ENCODE measurements at regions of chr10 and their contacts with region 1.

Region 1: GRCh38 chr10:11165591-11166543 is 148.2 kb downstream of the CELF2 start:
- DNase-seq: peak; percentile 59 to 89 (median 82)
- H3K4me3 ChIP-seq: peak overlapping the region; percentile 72
- H3K4me3 Mint-ChIP-seq: peak overlapping the region in 2 of 7 donors; percentile 99 to 100
- H3K27ac ChIP-seq: peak overlapping the region; percentile 92
- H3K27ac Mint-ChIP-seq: peak overlapping the region in 7 of 8 donors; percentile 91 to 100 (median 99)
- H3K4me1 ChIP-seq: peaks cover 59% of the 10 kb centered on the region
- H3K4me1 Mint-ChIP-seq: peaks cover 39 to 46% (median 45%) of the 10 kb centered on the region in 3 donors
- H3K27me3 ChIP-seq: no peaks in the 10 kb centered on the region
- H3K27me3 Mint-ChIP-seq: peaks cover 0 to 2% of the 10 kb centered on the region in 2 donors

Region 2: DNA sequence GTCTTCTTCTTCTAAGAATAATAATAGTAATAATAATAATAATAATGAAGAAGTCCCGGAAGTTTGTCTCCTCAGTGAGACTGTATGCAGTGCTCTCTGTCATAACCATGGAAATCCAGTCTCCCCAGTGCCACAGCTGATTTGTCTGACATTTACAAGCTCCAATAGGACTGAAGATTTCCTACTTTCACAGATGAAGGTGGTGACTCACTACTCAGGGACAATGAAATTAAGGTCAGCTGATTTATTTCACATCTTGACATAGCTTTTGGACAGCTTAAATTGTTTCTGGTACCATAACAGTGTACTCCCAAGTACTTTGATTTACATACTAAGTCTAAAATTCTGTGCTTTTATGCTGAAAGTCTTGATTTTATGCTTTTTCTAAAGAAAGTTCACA is 141.3 kb before region 1 on chr10:
- CTCF ChIA-PET with region 1: no interaction called
- POLR2A ChIA-PET with region 1: no interaction called
- DNase-seq: no peak
- H3K4me3 ChIP-seq: no peak overlapping the region
- H3K4me3 Mint-ChIP-seq: no peak overlapping the region
- H3K27ac ChIP-seq: no peak overlapping the region
- H3K27ac Mint-ChIP-seq: no peak overlapping the region
- H3K4me1 ChIP-seq: no peaks in the 10 kb centered on the region
- H3K4me1 Mint-ChIP-seq: no peaks in the 10 kb centered on the region
- H3K27me3 ChIP-seq: no peaks in the 10 kb centered on the region
- H3K27me3 Mint-ChIP-seq: peaks cover 11 to 65% of the 10 kb centered on the region in 2 donors

Region 3: GRCh38 chr10:11113156-11113555 is 52.7 kb before region 1 on chr10:
- CTCF ChIA-PET with region 1: interaction called, 30 read pairs
- POLR2A ChIA-PET with region 1: interaction called, 4 read pairs
- DNase-seq: peak in 3 of 5 donors; percentile 52 to 56 (median 55)
- H3K4me3 ChIP-seq: no peak overlapping the region
- H3K4me3 Mint-ChIP-seq: peak overlapping the region in 4 of 7 donors; percentile 10 to 66 (median 24)
- H3K27ac ChIP-seq: no peak overlapping the region
- H3K27ac Mint-ChIP-seq: peak overlapping the region in 7 of 8 donors; percentile 49 to 96 (median 74)
- H3K4me1 ChIP-seq: peaks cover 9% of the 10 kb centered on the region
- H3K4me1 Mint-ChIP-seq: peaks cover 11 to 27% (median 14%) of the 10 kb centered on the region in 3 donors
- H3K27me3 ChIP-seq: no peaks in the 10 kb centered on the region
- H3K27me3 Mint-ChIP-seq: no peaks in the 10 kb centered on the region

Region 4: DNA sequence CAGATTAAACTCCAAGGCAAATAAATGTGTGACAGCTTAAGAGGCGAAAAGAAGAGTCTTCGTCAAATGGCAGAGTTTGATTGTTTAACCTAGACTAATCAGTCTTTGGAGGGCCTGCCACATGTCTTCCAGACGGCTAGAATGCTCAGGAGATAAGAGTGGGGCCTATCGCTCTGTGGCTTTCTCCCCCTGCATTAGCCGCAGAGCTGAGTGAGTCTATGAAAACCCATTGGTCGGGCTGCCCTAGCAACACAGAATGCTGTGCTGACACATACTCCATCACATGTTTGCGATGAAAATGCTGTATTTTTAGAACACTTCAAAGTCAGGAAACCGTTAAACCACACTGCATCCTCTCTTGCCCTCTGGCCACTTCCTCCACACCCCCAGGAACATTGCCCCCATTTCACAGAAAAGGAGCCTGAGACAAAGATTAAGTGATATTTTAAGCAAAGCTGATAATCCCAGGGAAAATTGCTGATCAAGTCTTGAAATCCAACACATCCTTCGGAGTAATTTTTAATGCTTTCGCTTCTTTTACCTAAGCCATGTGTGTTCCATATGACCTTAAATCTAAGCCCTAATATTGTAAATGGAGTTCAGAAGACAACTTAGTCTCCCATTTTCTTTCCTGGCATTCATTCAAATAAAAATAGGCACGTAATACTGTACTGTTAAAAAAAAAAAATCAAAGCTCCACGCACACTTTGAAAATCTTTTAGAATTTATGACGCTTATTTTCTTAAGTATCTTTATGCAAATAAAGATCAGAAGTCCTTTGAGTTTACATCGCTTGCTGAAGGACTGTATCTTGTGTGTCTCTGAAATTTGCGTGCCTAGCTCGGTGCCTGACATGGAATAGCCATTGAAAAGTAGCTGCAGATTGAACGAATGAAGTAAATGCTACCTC is 13.0 kb after region 1 on chr10:
- CTCF ChIA-PET with region 1: interaction called, 117 read pairs
- POLR2A ChIA-PET with region 1: interaction called, 116 read pairs
- DNase-seq: peak; percentile 80 to 95 (median 89)
- H3K4me3 ChIP-seq: peak overlapping the region; percentile 42
- H3K4me3 Mint-ChIP-seq: peak overlapping the region in 3 of 7 donors; percentile 69 to 89 (median 78)
- H3K27ac ChIP-seq: peak overlapping the region; percentile 69
- H3K27ac Mint-ChIP-seq: peak overlapping the region in 1 of 8 donors; percentile 96
- H3K4me1 ChIP-seq: peaks cover 96% of the 10 kb centered on the region
- H3K4me1 Mint-ChIP-seq: peaks cover 0 to 31% (median 0%) of the 10 kb centered on the region in 3 donors
- H3K27me3 ChIP-seq: no peaks in the 10 kb centered on the region
- H3K27me3 Mint-ChIP-seq: no peaks in the 10 kb centered on the region

Region 5: GRCh38 chr10:11214407-11214806 is 48.5 kb after region 1 on chr10:
- CTCF ChIA-PET with region 1: interaction called, 3 read pairs
- POLR2A ChIA-PET with region 1: interaction called, 11 read pairs
- DNase-seq: no peak
- H3K4me3 ChIP-seq: no peak overlapping the region
- H3K4me3 Mint-ChIP-seq: peak overlapping the region in 3 of 7 donors; percentile 16 to 46 (median 44)
- H3K27ac ChIP-seq: no peak overlapping the region
- H3K27ac Mint-ChIP-seq: peak overlapping the region in 7 of 8 donors; percentile 75 to 95 (median 86)
- H3K4me1 ChIP-seq: peaks cover 83% of the 10 kb centered on the region
- H3K4me1 Mint-ChIP-seq: peaks cover 93 to 100% (median 99%) of the 10 kb centered on the region in 3 donors
- H3K27me3 ChIP-seq: no peaks in the 10 kb centered on the region
- H3K27me3 Mint-ChIP-seq: no peaks in the 10 kb centered on the region

Measured in CD8-positive, alpha-beta memory T cell (primary cell).